CD8-positive, alpha-beta T cell (primary cell): ENCODE measurements at regions of chr13 and their contacts with region 1.

Region 1: GRCh38 chr13:98821372-98822224 is 69.1 kb upstream of the SLC15A1 start:
- DNase-seq: no peak
- ATAC-seq: no peak
- H3K4me3 ChIP-seq: no peak overlapping the region
- H3K4me3 Mint-ChIP-seq: no peak overlapping the region
- H3K27ac ChIP-seq: no peak overlapping the region
- H3K27ac Mint-ChIP-seq: no peak overlapping the region
- H3K4me1 ChIP-seq: no peaks in the 10 kb centered on the region
- H3K4me1 Mint-ChIP-seq: peaks cover 7% of the 10 kb centered on the region
- H3K27me3 ChIP-seq: no peaks in the 10 kb centered on the region
- H3K27me3 Mint-ChIP-seq: no peaks in the 10 kb centered on the region
- CTCF ChIP-seq: no peak

Region 2: GRCh38 chr13:98542568-98543377 is 278.8 kb before region 1 on chr13:
- CTCF ChIA-PET with region 1: no interaction called
- POLR2A ChIA-PET with region 1: no interaction called
- intact Hi-C with region 1: loop called in 1 of 2 experiments (anchors 10 kb)
- DNase-seq: peak in 2 of 9 experiments; percentile 20 to 41
- ATAC-seq: peak; percentile 64
- H3K4me3 ChIP-seq: peak overlapping the region in 1 of 2 experiments; percentile 38
- H3K4me3 Mint-ChIP-seq: peak overlapping the region; percentile 75
- H3K27ac ChIP-seq: peak overlapping the region in 1 of 2 experiments; percentile 12
- H3K27ac Mint-ChIP-seq: peak overlapping the region; percentile 82
- H3K4me1 ChIP-seq: peaks cover 68% of the 10 kb centered on the region
- H3K4me1 Mint-ChIP-seq: peaks cover 91% of the 10 kb centered on the region
- H3K27me3 ChIP-seq: no peaks in the 10 kb centered on the region
- H3K27me3 Mint-ChIP-seq: no peaks in the 10 kb centered on the region
- CTCF ChIP-seq: no peak